Stomach (tissue), 19 donors: ENCODE measurements at regions of chr5 and their contacts with region 1.

Region 1: DNA sequence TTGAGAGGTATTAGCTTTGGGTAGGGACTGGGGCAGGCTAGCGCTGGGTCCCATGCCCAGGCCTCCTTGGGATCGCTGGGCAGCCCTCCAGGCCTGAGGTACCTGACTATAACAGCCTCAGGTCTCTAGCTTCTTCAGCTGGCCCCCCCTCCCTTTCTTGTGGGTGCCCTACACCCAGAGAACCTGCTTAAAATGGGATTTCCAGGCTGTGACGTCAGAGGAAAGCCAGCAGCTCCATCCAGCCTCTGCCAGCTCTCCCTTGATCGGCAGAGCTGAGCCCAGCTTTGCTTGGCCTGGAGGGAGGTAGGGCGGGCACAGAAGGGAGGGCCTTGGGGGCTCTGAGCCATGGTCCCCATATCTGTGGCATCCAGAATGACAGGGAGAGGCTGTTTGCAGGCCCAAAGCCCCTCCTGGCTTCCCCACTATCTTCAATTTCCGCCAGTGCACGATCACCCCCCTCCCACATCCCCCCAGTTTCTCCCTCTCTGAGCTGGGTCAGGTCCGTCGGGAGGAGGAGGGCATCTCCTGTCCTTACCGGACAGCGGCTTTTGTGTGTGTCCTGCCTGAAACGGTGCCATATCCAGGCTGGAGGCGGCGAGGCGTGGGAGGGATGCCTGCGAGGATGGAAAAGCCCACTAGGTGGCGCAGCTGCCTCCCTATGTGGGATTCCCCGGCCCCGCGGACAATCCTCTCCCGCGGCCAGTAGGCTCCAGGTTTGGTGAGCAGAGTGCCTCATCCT is 10.8 kb downstream of the REEP2 start:
- DNase-seq: peak; percentile 94 to 95
- H3K4me3 ChIP-seq: no peak overlapping the region
- H3K27ac ChIP-seq: peak overlapping the region in 1 of 5 donors; percentile 38
- H3K4me1 ChIP-seq: peaks cover 3 to 11% (median 9%) of the 10 kb centered on the region in 4 donors
- H3K27me3 ChIP-seq: no peaks in the 10 kb centered on the region
- CTCF ChIP-seq: peak in 5 of 7 experiments; percentile 92 to 97 (median 96)
- EP300 ChIP-seq: no peak
- POLR2A ChIP-seq: no peak

Region 2: DNA sequence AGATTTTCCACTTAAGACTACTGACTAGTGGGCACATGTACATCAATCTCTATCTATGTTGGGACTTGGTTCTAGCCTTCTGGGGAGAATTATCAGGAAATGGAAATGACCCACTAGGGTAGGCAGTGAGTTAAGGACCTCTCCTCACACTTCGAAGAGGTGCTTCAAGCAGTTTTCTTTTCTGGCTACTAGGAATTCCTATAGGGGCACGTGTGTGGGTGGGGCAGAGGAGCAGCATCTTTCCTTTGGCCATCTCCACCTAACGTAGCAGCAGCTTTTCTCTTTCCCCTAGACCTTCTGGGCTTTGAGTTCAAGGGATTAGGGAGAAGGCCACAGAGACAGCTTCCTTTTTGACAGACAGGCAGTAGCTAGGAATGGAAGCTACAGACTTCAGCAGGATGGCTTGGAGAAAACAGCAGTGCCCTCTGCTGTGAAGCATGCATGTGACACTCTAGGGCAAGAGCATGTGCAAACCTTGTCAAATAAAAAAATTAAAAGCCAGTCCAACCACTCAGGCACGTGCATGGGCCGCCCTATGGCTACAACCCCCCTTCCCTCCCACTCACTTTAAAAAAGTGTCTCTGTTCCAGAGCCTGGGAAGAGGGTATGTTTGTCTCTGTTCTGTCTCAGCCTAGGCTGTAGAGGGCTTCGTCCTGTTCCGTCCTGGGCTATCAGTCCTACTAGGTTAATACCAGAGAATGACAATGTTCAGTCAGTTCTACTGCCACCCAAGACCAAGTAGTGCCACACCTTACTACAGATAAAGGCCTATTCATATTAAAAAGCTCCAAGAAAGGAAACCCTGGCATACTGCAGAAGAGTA is 166.5 kb before region 1 on chr5:
- intact Hi-C with region 1: no loop called
- DNase-seq: peak; percentile 57 to 89
- H3K4me3 ChIP-seq: no peak overlapping the region
- H3K27ac ChIP-seq: no peak overlapping the region
- H3K4me1 ChIP-seq: peaks cover 0 to 7% (median 2%) of the 10 kb centered on the region in 4 donors
- H3K27me3 ChIP-seq: no peaks in the 10 kb centered on the region
- CTCF ChIP-seq: peak in 5 of 7 experiments; percentile 17 to 56 (median 37)
- EP300 ChIP-seq: no peak
- POLR2A ChIP-seq: no peak

Region 3: DNA sequence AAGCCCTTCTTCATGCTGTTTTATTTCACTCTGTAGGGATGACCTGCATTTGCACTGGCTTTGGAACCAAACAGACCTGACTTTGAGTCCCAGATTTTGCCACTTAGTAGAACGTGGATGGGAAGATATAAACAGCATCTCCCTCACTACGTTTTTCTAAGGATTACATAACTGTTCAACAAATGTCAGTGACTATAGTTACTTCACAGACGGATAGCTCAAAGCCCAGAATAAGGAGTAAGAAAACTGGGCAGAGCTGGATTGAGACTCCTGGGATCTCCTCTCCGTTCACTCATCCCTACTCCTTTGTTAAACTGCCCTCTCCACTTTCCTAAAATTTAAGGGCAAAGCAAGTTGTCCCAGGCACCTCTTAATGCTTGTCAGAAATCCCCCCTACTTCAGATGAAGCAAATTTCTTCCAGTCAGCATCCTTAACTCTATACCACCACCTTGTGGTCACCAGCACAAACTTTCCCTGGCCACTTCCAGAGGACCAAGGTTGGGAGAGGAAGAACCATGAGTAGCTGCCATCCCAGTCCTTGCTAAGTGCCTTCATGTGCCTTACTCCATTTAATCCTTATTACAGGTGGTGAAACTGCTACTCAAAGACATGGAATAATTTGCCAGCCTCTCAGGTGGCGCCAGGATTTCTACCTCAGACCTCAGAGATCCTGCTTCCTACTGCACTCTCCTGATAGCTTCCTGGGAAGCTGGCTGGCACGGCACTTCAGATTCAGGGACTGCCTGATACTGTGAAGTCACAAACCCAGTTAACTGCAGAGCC is 54.0 kb after region 1 on chr5:
- intact Hi-C with region 1: loop called (anchors 5 kb)
- DNase-seq: peak; percentile 44 to 86
- H3K4me3 ChIP-seq: no peak overlapping the region
- H3K27ac ChIP-seq: peak overlapping the region in 2 of 5 donors; percentile 47 to 60
- H3K4me1 ChIP-seq: peaks cover 11 to 26% (median 16%) of the 10 kb centered on the region in 4 donors
- H3K27me3 ChIP-seq: no peaks in the 10 kb centered on the region
- CTCF ChIP-seq: peak in 5 of 7 experiments; percentile 60 to 89 (median 73)
- EP300 ChIP-seq: no peak
- POLR2A ChIP-seq: no peak

Region 4: DNA sequence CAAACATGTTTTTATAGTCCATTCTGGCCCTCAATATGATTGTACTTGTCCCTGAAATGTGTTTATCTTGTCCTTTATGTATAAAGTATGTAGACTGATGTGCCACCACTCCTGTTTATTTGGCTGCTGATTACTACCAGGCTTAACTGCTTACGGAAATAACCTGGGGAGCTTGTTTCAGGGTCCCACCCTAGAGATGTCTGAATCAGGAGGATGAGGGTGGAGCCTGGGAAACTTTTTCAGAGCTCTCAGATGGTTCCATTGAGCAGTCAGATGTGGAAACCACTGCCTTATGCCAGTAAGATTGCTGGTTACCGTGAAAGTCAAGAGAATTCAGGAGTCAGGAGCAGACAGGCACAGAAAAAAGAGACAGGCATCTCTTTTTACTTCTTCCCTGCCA is 914.3 kb after region 1 on chr5:
- intact Hi-C with region 1: no loop called
- DNase-seq: no peak
- H3K4me3 ChIP-seq: no peak overlapping the region
- H3K27ac ChIP-seq: no peak overlapping the region
- H3K4me1 ChIP-seq: peaks cover 0 to 16% (median 4%) of the 10 kb centered on the region in 4 donors
- H3K27me3 ChIP-seq: no peaks in the 10 kb centered on the region
- CTCF ChIP-seq: no peak
- EP300 ChIP-seq: no peak
- POLR2A ChIP-seq: no peak